ENCODE measurements at regions of chr15 and their contacts with region 1.

Region 1: DNA sequence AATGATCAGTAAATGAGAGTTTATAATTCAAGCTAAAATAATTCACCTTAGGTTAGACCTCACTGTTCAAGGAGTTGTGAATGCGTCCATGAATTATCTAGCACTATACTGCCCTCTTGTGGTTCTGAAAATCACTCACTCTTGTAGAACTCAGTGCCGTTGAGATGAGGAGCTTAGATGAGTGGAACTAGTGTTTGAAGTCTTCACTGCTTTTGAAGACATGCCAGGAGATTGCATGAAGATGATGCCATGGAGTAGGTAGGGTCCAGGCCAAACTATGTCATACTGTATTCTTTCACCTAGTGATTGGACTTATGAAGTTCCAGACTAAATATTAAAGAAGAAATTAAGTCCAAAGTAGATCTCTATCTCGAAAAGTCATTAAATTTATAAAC is 28.8 kb downstream of the LYSMD4 start:
- DNase-seq: peak; percentile 90
- H3K4me3 ChIP-seq: no peak overlapping the region
- H3K27ac ChIP-seq: no peak overlapping the region
- H3K4me1 ChIP-seq: peaks cover 23% of the 10 kb centered on the region
- H3K27me3 ChIP-seq: no peaks in the 10 kb centered on the region
- CTCF ChIP-seq: peak; percentile 80

Region 2: GRCh38 chr15:99104788-99105513 is 599.5 kb before region 1 on chr15 and contains the start of gene SYNM:
- CTCF ChIA-PET with region 1: interaction called, 11 read pairs
- POLR2A ChIA-PET with region 1: no interaction called
- intact Hi-C with region 1: loop called (anchors 5 kb)
- DNase-seq: peak; percentile 75
- H3K4me3 ChIP-seq: peak within 1 kb of the TSS; percentile 54
- H3K27ac ChIP-seq: no peak within 1 kb of the TSS
- H3K4me1 ChIP-seq: peaks cover 7% of the 10 kb centered on the region
- H3K27me3 ChIP-seq: peaks cover 21% of the 10 kb centered on the region
- CTCF ChIP-seq: peak; percentile 61
- total RNA-seq, gene SYNM: 2.6 and 2.7 TPM in 2 replicates

Region 3: DNA sequence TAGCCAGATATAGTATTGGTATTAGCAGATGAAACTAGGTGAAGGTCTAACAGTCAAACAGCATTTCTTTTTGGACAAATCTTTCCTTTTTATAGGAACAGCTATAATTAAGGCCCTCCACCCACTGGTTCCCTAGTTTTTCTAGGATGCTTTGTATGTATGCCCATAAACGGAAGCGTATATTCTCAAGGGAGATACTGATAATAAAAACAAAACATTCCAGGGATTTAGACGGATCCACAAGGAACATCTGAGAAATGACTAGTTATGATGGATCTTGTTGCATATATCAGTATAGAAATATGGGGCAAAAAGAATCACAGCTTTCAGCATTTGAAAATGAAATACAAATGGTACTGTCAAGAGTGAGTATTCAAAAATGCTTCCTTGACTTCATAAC is 430.6 kb before region 1 on chr15:
- CTCF ChIA-PET with region 1: interaction called, 36 read pairs
- POLR2A ChIA-PET with region 1: no interaction called
- intact Hi-C with region 1: loop called (anchors 5 kb)
- DNase-seq: no peak
- H3K4me3 ChIP-seq: no peak overlapping the region
- H3K27ac ChIP-seq: no peak overlapping the region
- H3K4me1 ChIP-seq: no peaks in the 10 kb centered on the region
- H3K27me3 ChIP-seq: no peaks in the 10 kb centered on the region
- CTCF ChIP-seq: no peak

Region 4: GRCh38 chr15:99282121-99282520 is 422.3 kb before region 1 on chr15:
- CTCF ChIA-PET with region 1: interaction called, 11 read pairs
- POLR2A ChIA-PET with region 1: interaction called, 3 read pairs
- intact Hi-C with region 1: loop called (anchors 1 kb)
- DNase-seq: no peak
- H3K4me3 ChIP-seq: no peak overlapping the region
- H3K27ac ChIP-seq: no peak overlapping the region
- H3K4me1 ChIP-seq: no peaks in the 10 kb centered on the region
- H3K27me3 ChIP-seq: no peaks in the 10 kb centered on the region
- CTCF ChIP-seq: no peak

Region 5: GRCh38 chr15:99565299-99566156 is 138.9 kb before region 1 on chr15 and contains the start of gene MEF2A:
- CTCF ChIA-PET with region 1: interaction called, 6 read pairs
- POLR2A ChIA-PET with region 1: no interaction called
- intact Hi-C with region 1: loop called (anchors 5 kb)
- DNase-seq: peak; percentile 96
- H3K4me3 ChIP-seq: peak within 1 kb of the TSS; percentile 88
- H3K27ac ChIP-seq: peak within 1 kb of the TSS; percentile 91
- H3K4me1 ChIP-seq: peaks cover 18% of the 10 kb centered on the region
- H3K27me3 ChIP-seq: no peaks in the 10 kb centered on the region
- CTCF ChIP-seq: no peak
- total RNA-seq, gene MEF2A: 26.4 and 29.5 TPM in 2 replicates

Region 6: DNA sequence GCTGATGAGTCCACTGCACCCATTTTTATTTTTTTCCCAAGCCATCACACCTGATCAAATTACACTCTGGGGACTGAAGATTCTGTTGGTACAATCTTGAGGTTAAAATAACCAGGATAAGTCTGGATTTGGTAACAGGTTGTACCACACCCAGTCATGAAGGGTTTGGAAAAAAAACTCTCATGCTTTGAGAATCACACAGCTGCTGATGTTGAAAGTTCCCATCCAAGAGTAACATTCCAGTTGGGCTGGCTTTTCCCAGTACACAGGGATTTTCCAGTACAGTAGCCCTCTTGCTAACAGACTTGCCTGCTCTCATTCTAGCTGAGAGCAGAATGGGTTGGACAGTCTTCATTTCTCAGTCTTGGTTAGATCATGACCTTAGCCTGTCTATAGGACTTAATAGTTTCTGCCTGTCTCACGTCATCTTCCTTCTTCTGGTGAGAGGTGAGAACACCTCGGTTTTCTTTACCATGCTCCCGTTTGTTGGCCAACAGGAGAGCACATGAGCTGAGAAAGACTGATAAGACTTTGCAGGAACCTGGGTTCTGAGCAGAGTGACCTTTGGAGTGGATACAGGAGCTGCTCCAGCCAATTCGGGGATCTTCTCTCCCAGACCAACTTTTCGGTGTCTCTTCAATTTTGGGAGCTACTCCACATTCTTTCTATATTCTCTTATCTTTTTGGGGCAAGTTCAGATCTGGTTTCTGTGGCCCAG is 328.9 kb after region 1 on chr15:
- CTCF ChIA-PET with region 1: no interaction called
- POLR2A ChIA-PET with region 1: no interaction called
- intact Hi-C with region 1: no loop called
- DNase-seq: no peak
- H3K4me3 ChIP-seq: no peak overlapping the region
- H3K27ac ChIP-seq: no peak overlapping the region
- H3K4me1 ChIP-seq: no peaks in the 10 kb centered on the region
- H3K27me3 ChIP-seq: no peaks in the 10 kb centered on the region
- CTCF ChIP-seq: no peak